Cardiac septum (tissue), 1 donor: ENCODE measurements at regions of chr22 and their contacts with region 1.

Region 1: DNA sequence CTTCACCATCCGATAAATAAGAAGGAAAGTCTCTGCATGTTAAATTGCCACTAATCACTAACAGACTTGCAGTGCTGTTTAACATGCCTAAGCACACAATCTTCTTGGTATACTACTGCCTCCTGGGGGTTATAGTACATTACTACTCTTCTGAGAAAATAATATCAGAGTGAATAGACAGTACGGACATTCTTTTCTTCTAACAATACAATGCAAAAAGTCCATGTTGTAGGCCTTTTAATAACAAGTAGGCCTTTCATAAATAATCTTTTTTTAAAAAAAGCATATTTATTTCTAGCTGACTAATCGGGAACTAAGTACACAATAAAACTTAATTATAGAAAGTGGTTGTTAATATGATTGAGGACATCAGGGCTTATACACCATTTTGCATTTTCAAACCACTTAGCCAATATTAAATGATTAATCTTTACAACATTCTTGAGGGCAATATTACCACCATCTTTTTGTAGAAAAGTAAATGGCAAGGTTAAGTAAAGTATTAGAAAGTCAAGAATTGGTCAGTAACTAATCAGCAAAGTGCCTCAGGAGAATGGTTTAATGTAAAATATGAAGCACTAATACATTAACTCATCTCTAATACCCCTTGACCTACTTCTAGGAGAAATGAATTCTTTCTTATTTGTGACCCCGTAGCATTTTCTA is 84.7 kb downstream of the TTC28 start:
- DNase-seq: no peak

Region 2: DNA sequence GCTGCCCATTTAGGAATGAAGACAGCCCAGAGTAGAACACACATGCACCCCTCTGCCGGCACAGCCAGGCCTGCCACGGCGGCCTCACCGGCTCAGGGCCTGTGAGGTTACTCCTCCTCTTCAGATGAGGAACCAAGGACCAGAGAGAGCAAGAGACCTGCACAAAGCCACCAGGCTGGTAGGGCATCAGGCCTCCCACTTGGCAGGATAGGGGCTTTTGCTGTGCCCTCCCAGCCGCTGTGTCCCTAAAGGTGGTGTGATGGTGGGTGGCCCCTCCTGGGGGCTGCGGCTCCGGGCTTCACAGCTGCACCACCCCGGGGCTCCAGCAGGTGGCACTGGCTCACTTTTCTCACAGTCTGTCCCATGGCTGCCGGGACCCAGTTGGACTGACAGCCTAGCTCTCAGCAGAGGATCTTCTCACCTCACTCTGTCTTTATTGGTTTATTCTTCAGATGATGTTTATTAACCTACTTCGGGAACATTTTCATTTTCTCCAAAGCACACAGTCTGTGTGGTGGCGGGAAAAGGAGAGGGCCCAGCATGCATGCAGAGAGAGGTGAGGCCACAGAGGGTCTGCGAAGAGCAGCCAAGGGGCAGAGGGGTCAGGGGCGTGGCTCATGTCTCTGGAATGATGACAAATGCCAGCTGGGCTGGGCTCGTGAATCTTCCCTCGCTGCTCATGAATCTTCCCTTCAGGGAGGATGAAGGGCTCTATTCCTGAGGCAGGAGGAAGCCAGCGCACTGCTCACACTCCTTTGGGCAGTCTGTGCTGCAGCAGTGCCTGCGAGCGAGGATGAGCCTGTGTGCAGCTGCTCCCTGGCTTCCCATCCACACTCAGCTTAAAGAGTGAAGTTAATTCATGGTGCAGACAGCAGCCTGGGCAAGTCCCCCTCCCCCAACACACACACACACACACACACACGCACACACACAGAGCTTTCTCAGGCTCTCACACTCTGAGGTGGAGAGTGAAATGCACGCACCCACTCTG is 574.8 kb before region 1 on chr22:
- intact Hi-C with region 1: loop called (anchors 2 kb)
- DNase-seq: peak; percentile 84

Region 3: GRCh38 chr22:28051787-28052356 is 543.1 kb before region 1 on chr22:
- intact Hi-C with region 1: loop called (anchors 2 kb)
- DNase-seq: no peak

Region 4: DNA sequence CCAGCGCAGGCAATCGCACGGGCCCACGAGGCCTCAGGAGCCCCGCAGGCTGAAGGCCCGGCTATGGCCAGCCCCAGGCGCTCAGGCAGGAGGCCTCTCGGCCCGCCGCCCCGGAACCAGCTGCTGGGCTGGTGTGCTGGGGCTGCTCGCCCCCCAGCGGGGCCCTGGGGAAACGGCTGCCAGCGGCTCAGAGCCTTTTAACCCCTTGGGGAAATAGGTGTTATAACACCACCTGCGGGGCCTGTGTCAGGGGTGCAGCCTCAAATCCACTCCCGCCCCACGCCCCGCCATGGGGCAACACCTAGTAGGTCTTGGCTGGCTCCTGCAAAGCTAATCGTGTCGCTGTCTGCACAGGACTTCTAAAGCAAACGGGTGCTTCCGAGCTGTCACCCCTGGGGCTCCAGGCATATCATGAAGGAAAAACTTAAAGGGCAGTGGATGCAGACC is 152.6 kb before region 1 on chr22:
- intact Hi-C with region 1: no loop called
- DNase-seq: peak; percentile 89

Region 5: GRCh38 chr22:28829358-28830181 is 234.6 kb after region 1 on chr22:
- intact Hi-C with region 1: loop called (anchors 2 kb)
- DNase-seq: peak; percentile 81